ENCODE measurements at regions of chr3 and their contacts with region 1.

Region 1: DNA sequence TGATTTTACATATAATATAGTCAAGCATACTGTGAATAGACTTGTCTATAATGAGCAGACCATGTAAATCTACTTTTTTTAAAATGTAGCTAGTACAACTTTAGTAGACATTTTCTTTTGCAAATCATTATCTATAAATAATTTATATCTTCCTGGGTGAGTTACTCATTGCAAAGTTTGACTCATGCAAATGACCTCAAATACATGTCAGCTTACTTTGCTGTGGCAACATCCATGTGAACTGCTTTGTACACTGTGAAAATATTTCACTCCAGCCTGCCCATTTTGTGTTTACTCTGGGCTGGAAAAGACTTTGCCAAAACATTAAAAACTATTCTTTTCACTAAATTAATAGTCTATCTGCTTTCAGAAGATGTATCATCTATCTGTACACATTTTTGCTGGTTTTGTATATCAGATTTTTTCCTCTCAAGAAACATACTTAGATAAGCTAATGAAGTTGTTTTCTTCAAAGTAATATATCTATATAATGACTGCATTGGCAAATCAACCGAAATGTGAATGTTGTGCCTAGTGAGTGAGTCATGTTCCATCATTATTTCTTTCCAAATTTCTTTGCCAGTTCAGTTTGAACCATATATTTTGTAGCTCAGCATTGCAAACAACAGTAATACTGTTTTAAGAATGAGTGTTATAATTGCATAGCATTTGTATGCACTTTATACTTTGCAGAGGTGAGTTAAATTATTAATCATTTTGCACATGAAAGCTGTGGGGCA is 26.5 kb downstream of the IGSF10 start:
- DNase-seq: peak; percentile 41
- H3K4me3 Mint-ChIP-seq: no peak overlapping the region
- H3K27ac Mint-ChIP-seq: peak overlapping the region; percentile 79
- H3K4me1 Mint-ChIP-seq: peaks cover 47% of the 10 kb centered on the region
- H3K27me3 Mint-ChIP-seq: no peaks in the 10 kb centered on the region
- CTCF ChIP-seq: no peak

Region 2: GRCh38 chr3:151290673-151291072 is 143.6 kb before region 1 on chr3:
- CTCF ChIA-PET with region 1: interaction called, 3 read pairs
- intact Hi-C with region 1: loop called (anchors 5 kb)
- DNase-seq: peak; percentile 25
- H3K4me3 Mint-ChIP-seq: no peak overlapping the region
- H3K27ac Mint-ChIP-seq: no peak overlapping the region
- H3K4me1 Mint-ChIP-seq: no peaks in the 10 kb centered on the region
- H3K27me3 Mint-ChIP-seq: no peaks in the 10 kb centered on the region
- CTCF ChIP-seq: peak; percentile 63

Region 3: DNA sequence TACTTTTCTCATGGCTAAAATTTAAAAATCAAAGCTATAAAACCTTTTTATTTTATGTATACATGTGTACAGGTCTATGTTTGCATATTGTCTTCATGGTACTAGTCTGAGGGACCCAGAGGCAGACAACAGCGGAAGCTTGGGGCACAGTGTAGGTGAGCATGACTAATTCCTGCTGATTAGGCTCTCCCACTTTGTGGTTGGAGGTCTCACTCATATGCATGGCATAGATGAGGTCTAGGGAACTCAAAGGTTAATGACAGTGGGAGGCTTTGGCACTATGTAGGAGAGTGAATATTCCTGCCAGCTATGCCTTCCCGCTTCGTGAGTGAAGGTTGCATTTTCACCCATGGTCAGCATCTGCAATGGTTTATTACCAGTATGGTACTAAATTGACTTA is 251.9 kb after region 1 on chr3:
- CTCF ChIA-PET with region 1: no interaction called
- intact Hi-C with region 1: no loop called
- DNase-seq: peak; percentile 42
- H3K4me3 Mint-ChIP-seq: no peak overlapping the region
- H3K27ac Mint-ChIP-seq: no peak overlapping the region
- H3K4me1 Mint-ChIP-seq: peaks cover 21% of the 10 kb centered on the region
- H3K27me3 Mint-ChIP-seq: no peaks in the 10 kb centered on the region
- CTCF ChIP-seq: no peak